ENCODE measurements at regions of chr2 and their contacts with region 1.

Region 1: DNA sequence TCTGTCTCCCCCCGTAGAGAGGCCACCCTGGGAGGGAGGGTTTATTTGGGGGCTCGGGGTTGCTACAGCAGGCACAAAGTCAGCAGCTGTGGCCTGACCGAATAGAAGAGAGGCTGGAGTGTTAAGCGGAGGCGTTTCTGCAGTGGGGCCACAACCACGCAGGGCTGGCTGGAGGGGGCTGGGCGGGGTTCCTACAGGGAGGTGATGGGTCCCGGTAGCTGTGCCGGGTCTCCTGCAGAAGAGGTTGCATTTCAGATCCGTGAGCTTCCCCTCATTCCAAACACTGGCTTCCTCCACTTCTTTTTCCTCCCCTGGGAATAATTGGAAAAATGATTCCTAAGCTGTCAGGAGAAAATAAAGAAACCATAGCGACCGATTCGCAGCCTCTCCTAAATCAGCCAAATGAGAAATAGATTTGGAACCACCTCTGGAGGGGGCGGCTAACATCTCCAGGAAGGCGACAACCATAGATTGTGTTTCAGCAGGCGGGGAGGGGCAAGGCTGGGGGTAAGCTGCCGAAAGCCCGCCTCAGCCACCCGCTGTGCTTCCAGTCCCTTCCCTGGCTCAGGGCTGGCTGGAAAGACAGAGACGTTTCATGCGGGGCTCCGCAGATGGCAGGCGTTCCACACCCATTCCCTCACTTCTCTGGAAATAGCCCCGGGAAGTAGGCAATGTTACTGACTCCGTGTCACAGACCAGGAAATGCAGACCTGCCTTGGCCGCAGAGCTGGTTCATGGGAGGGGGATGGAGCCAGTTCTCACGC is 85.6 kb upstream of the TAF1B start:
- DNase-seq: peak; percentile 87

Region 2: GRCh38 chr2:9693211-9693520 is 64.5 kb before region 1 on chr2:
- intact Hi-C with region 1: loop called (anchors 5 kb)
- DNase-seq: peak; percentile 85

Region 3: GRCh38 chr2:9796056-9797010 is 38.6 kb after region 1 on chr2:
- intact Hi-C with region 1: no loop called
- DNase-seq: no peak

Region 4: DNA sequence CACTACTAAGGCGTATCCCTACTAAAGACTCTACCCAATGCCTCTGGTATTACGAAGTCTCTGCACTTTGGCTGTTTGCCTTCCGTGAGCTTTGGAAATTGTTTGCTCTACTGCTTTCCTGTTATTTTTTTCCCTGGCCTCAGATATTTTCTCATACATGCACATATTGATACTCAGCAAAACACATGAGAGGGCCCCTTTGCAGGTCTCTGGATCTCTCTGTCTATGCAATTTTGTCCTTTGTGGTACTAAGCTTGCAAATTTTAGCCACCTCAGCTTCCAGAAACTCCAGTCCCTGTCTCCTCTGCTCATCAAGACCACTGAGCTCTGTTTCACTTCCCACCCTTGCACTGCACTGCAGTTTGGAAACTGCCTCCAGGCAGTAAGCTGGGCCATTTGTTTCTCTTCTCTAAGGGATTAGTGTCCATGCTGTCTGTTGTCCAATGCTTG is 132.2 kb after region 1 on chr2:
- intact Hi-C with region 1: no loop called
- DNase-seq: no peak